ENCODE measurements at regions of chrX and their contacts with region 1.

Region 1: DNA sequence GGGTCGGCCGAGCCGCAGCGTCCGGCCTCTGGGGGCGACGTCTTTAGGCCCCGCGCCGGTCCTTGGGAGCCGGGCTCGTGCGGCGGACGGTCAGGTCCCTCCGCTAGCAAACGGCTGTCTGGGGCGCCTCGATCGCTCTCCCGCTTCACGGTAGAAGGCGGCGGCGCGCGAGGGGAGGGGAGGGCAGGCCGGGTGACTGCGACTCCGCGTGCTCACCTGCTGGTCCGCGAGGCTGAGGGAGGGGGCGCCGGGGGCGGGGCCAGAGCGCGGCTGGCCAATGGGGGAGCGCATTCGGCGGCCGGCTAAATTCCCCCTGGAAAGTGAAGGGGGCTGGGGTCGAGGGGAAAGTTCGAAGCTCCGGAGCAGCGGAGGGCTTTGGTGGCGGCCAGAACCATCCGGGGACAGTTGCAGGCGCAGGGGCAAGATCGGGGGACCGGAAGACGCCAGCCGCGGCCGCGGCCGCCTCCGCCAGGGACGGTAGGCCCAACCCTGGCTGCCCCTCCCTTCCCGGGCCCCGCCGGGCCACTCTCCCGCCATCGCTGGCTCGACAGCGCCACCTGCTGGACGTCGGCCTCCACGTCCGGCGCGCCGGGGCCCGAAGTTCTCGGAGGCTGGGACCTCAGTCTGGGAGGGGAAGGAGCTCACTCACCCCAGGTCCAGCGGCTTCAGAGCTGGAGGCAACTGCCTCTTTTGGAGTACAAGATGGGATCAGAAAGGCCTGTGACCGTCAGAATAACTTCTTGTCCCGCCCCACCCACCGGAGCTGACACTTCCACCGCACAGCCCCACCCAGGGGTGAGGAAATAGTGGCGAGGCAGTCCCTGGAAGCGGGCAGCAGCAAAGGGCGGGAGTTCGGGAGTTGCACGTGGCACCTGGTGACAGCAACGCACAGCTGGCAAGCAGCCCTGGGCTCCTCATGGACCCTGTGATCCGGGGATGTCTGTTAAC is 49.9 kb downstream of the ELF4 start:
- DNase-seq: peak; percentile 50 to 87 (median 77)
- ATAC-seq: peak; percentile 82
- H3K4me3 ChIP-seq: peak overlapping the region; percentile 45
- H3K4me3 Mint-ChIP-seq: peak overlapping the region; percentile 71
- H3K27ac ChIP-seq: no peak overlapping the region
- H3K27ac Mint-ChIP-seq: no peak overlapping the region
- H3K4me1 ChIP-seq: peaks cover 13% of the 10 kb centered on the region
- H3K4me1 Mint-ChIP-seq: peaks cover 10% of the 10 kb centered on the region
- H3K27me3 ChIP-seq: no peaks in the 10 kb centered on the region
- H3K27me3 Mint-ChIP-seq: no peaks in the 10 kb centered on the region
- CTCF ChIP-seq: peak; percentile 78

Region 2: DNA sequence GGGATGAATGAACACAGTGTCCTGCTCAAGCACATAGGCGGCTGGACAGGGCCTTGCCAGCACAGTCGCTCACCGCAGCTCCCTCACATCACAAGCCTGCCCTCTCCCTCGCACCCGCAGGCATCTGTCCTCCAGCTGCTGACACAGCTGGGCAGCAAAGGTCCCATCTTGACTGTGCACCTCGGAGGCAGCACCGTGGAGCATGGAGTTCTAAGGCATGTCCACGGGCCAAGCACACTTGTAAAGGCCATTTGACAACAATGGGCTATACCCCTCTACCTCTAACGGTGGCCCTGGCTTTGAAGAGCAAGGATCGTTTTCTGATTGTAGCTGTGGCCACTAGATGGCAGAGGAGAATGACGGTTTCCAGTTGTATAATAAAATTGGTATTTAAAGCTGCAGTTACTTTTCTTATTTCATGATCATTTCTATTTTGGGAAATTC is 459.4 kb before region 1 on chrX:
- CTCF ChIA-PET with region 1: no interaction called
- POLR2A ChIA-PET with region 1: no interaction called
- intact Hi-C with region 1: loop called (anchors 2 kb)
- DNase-seq: peak in 5 of 14 experiments; percentile 5 to 54 (median 34)
- ATAC-seq: peak; percentile 33
- H3K4me3 ChIP-seq: no peak overlapping the region
- H3K4me3 Mint-ChIP-seq: no peak overlapping the region
- H3K27ac ChIP-seq: no peak overlapping the region
- H3K27ac Mint-ChIP-seq: no peak overlapping the region
- H3K4me1 ChIP-seq: peaks cover 22% of the 10 kb centered on the region
- H3K4me1 Mint-ChIP-seq: peaks cover 29% of the 10 kb centered on the region
- H3K27me3 ChIP-seq: no peaks in the 10 kb centered on the region
- H3K27me3 Mint-ChIP-seq: no peaks in the 10 kb centered on the region
- CTCF ChIP-seq: peak; percentile 51

Region 3: DNA sequence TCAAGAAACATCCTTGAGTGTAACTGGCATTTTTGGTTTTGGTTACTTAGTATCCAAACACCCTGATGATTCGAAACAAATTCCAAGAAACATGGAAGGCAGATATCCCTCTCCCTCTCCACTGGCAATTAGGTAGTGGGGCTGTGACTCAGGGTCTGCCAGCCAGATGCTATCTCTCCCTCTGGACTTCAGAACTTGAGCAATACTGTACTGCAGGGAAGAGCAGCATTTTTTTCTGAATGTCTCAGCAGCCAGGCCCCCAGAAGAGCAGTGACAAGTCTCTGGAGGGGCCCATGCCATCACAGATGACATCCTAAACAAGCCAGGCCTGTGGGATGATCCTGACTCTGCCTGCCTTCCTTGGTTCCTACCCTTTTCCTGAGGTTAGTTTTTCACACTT is 115.2 kb before region 1 on chrX:
- CTCF ChIA-PET with region 1: no interaction called
- POLR2A ChIA-PET with region 1: no interaction called
- intact Hi-C with region 1: no loop called
- DNase-seq: no peak
- ATAC-seq: no peak
- H3K4me3 ChIP-seq: no peak overlapping the region
- H3K4me3 Mint-ChIP-seq: no peak overlapping the region
- H3K27ac ChIP-seq: no peak overlapping the region
- H3K27ac Mint-ChIP-seq: no peak overlapping the region
- H3K4me1 ChIP-seq: no peaks in the 10 kb centered on the region
- H3K4me1 Mint-ChIP-seq: no peaks in the 10 kb centered on the region
- H3K27me3 ChIP-seq: no peaks in the 10 kb centered on the region
- H3K27me3 Mint-ChIP-seq: no peaks in the 10 kb centered on the region
- CTCF ChIP-seq: no peak